Heart right ventricle (tissue), 16 donors: ENCODE measurements at regions of chr5 and their contacts with region 1.

Region 1: DNA sequence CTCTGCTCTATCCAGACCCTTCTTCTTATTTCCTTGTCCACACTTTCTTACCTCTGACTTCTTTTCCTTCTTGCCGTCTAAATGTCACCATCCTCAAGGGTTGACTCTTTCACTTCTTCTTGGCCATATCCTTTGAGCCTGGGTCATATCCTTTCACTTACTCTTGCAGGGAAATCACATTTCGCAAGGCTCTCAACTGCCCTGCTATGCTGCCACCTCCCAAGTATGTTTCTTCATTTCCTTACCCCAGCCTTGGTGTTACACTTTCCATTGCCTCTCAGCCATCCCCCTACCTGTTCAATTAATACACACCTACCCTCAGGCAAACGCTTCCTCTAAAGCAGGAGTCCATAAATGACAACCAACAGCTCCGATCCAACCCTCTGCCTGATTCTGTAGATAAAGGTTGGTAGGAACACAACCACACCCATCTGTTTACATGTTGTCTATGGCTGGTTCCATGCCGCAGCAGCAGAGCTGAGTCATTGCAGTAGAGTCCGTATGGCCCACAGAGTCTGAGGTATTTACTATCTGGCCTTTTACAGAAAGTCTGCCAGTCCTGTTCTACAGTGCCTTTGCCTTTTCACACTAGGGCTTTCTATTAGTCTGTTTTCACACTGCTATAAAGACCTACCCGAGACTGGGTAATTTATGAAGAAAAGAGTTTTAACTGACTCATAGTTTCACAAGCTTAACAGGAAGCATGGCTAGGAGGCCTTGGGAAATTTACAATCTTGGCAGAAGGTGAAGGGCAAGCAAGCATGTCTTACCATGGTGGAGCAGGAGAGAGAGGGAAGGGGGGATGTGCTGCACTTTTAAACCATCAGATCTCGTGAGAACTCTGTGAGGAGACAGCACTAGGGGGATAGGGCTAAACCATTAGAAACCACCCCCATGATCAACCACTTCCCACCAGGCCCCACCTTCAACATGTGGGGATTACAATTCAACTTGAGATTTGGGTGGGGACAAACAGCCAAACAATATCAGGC is 97.9 kb downstream of the SV2C start:
- DNase-seq: no peak
- ATAC-seq: peak in 1 of 8 donors; percentile 20
- H3K4me3 ChIP-seq: no peak overlapping the region
- H3K27ac ChIP-seq: peak overlapping the region in 1 of 10 donors; percentile 19
- H3K4me1 ChIP-seq: peaks cover 0 to 11% (median 0%) of the 10 kb centered on the region in 9 donors
- H3K27me3 ChIP-seq: peaks cover 0 to under 1% (median 0%) of the 10 kb centered on the region in 7 donors
- CTCF ChIP-seq: no peak

Region 2: DNA sequence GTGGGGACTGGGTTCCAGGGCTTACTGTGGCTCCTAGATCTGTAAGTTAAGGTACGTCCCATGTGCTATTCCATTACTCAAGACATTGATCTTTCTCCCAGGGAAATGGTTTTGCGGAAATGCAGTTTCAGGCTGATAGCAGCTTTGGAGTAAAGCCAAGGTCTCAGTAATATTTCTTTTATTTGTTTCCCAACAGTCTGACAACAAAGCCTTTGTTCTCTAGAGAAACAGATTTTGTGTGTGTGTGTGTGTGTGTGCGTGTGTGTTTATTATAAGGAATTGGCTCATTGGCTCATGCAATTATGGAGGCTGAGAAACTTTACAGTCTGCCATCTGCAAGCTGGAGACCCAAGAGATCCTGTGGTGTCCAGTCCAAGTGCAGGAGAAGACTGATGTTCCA is 451.8 kb before region 1 on chr5:
- intact Hi-C with region 1: loop called in 4 of 10 experiments (anchors 5 to 10 kb)
- DNase-seq: no peak
- ATAC-seq: no peak
- H3K4me3 ChIP-seq: no peak overlapping the region
- H3K27ac ChIP-seq: no peak overlapping the region
- H3K4me1 ChIP-seq: no peaks in the 10 kb centered on the region
- H3K27me3 ChIP-seq: peaks cover 0 to 5% (median 0%) of the 10 kb centered on the region in 7 donors
- CTCF ChIP-seq: no peak

Region 3: DNA sequence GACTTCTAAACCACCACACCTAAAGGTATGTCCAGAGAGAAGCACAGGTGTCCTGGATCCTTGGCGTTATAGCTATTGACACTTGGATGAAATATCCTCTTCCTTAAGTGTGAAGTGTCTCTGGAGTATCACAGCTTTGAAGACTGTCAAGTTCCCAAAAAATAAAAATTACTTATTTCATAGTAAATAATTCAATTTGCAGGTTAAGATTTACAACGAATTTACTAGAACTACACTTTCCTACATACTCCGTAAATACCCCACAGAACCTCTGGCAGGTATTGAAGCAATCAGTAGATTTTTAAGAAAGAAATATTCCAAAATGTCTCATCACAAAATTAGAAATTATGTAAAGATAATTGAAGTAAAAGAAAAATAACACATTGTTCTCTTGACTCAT is 436.8 kb before region 1 on chr5:
- intact Hi-C with region 1: loop called in 5 of 10 experiments (anchors 5 to 10 kb)
- DNase-seq: no peak
- ATAC-seq: no peak
- H3K4me3 ChIP-seq: no peak overlapping the region
- H3K27ac ChIP-seq: no peak overlapping the region
- H3K4me1 ChIP-seq: no peaks in the 10 kb centered on the region
- H3K27me3 ChIP-seq: peaks cover 0 to 4% (median 0%) of the 10 kb centered on the region in 7 donors
- CTCF ChIP-seq: no peak

Region 4: DNA sequence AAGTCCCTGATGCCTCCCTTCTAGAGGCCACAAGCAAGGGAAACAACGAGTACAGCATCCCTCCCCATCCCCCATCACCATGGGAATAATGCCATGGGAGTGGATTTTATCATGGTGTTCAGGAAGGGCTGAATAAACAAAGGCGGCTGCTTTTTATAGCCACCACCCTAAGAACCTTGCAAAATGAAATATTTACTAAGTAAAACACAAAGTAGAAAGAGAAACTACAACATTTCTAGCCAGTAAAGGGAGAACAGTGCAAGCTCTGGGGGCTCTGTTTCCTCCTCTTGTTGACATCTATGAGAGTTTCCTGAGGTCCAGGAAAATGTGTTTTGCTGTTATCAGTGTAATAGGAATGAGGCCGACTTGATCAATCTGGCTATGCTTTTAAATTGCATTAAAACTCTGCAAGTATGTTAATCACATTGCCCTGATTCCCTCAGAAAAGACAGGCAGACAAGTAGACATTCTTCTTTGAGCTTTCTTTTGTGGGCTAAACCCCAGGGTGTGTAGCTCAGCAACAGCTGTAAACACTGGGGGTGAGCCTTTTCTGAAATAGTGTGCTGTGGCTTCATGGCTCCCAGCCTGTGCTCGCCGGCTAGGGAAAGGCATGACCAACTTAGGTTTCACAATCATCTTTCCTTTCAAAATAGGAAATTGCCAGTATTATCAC is 66.8 kb before region 1 on chr5:
- intact Hi-C with region 1: no loop called
- DNase-seq: peak in 1 of 2 donors; percentile 7
- ATAC-seq: peak in 7 of 8 donors; percentile 23 to 67 (median 49)
- H3K4me3 ChIP-seq: no peak overlapping the region
- H3K27ac ChIP-seq: no peak overlapping the region
- H3K4me1 ChIP-seq: peaks cover 0 to 20% (median 0%) of the 10 kb centered on the region in 9 donors
- H3K27me3 ChIP-seq: peaks cover 0 to 3% (median 0%) of the 10 kb centered on the region in 7 donors
- CTCF ChIP-seq: no peak